Activated T-helper 1 cell treated with anti-CD3 and anti-CD28 coated beads, Interleukin-12 subunit alpha, Interleukin-12 subunit beta, Interleukin-2, Interleukin-4 antibody, amounts not matched to agents 30 ng/mL and 10 ng/mL and 1 ng/mL, durations not matched to agents 14 hours and 24 hours and 36 hours (primary cell): ENCODE measurements at regions of chr20 and their contacts with region 1.

Region 1: DNA sequence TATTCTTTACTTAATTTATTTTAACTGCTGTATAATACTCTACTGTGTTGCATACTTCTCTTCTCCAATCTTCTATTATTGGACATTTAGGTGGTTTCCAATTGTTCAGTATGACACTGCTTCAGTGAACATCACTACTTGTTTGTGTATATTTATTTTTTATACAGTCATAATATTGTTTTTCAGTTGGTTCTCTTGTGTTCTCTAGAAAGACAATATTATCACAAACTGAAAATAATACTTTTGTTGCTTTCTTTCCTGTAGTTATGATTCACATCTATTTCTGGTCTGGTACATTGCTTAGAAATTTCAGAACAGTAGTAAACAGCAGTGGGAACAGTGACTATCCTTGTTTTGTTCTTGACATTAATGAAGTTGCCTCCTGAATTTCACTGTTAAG is 62.8 kb upstream of the GTSF1L start:
- DNase-seq: no peak
- H3K4me3 Mint-ChIP-seq: no peak overlapping the region
- H3K27ac Mint-ChIP-seq: peak overlapping the region; percentile 44
- H3K4me1 Mint-ChIP-seq: peaks cover 10% of the 10 kb centered on the region
- H3K27me3 Mint-ChIP-seq: peaks cover 2% of the 10 kb centered on the region

Region 2: GRCh38 chr20:43846516-43846905 is 56.9 kb after region 1 on chr20:
- intact Hi-C with region 1: loop called (anchors 2 kb)
- DNase-seq: no peak
- H3K4me3 Mint-ChIP-seq: no peak overlapping the region
- H3K27ac Mint-ChIP-seq: no peak overlapping the region
- H3K4me1 Mint-ChIP-seq: peaks cover 40% of the 10 kb centered on the region
- H3K27me3 Mint-ChIP-seq: peaks cover 7% of the 10 kb centered on the region